K562 (cell line): ENCODE measurements at regions of chr10 and their contacts with region 1.

Region 1: DNA sequence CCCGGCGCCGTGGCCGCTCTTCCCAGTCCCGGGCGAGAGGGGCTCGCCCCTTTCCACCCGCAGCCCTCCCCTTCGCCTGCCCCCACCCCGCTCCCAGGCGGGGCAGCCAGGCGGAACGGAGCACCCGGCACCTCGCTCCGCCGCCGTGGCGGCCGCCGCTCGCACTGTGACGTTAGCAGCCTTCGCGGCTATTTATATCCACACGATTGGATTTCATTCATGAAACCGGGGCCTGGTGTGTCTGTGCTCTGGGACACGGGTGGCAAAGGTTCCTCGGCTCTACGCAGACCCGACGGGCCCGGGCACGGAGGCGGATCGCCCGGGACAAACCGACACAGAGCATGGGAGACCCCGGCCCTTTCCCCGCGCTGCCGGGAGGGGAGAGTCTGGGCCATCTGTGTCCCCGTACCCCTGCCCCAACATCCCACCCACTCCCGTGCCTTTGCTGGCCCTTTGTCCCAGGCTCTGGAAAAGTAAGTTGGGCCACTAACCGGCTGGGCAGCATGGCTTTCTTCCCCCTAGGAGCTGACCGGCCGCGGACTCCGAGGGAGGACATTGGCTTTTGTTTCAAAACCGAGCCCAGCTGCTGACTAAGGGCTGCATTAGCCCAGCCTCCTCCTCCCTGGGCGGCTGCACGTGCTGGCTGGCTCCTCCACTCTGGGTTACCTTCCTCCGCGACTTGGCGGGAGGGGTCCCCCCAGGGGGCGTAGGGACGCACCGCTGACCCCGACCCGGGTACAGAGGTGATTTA is at the start of gene RHOBTB1:
- DNase-seq: peak; percentile 73 to 83 (median 78)
- ATAC-seq: peak; percentile 84
- H3K4me3 ChIP-seq: peak within 1 kb of the TSS; percentile 67
- H3K27ac ChIP-seq: peak within 1 kb of the TSS; percentile 87
- H3K4me1 ChIP-seq: peaks cover 15 to 23% of the 10 kb centered on the region in 2 experiments; a peak in 4 of 5 replicates
- H3K27me3 ChIP-seq: no peaks in the 10 kb centered on the region
- CTCF ChIP-seq: 0 out of 6 replicates have a peak, but pooled peaks of 1 of the 3 experiments have one; percentile 1
- EP300 ChIP-seq: no peak
- POLR2A ChIP-seq: peak; percentile 74
- RAD21 ChIP-seq: no peak
- polyA plus RNA-seq, gene RHOBTB1: 1.7 to 3.8 TPM

Region 2: DNA sequence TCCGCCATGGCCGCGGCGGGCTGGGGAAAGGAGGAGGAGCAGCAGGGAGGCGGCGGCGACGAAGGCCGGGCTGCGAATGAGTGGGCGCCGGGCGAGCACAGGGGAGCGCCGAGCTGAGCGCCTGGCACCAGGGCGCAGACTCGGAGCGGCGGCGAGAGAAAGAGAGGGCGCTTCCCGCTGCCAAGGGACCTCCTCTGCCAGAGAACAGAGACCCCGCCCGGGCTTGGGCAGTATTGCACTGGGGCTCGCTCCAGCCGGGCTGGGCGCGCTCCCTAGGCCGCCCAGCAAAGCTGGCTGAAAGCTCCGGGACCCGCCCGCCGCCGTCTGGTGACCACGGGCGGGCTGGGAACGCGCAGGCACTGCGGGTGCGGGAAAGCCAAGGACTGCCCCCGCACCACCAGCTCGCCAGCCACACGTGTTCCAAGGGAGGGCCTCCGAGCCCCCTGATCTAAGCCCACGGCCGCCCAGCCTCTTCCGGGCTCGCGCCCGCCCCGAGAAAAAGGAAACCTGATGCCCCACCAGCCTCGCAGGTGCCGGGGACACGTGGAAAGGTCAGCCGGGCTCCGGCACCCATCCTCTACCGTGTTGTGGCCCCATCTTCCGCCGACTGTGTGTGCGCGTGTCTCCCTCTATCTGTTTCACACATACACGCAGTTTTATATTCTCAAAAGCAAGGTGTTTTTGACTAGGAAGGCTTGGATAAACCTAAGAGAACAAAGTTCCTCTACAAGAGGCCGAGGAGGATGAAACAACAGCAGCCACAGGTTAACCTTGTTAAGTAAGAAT is 1037.7 kb before region 1 on chr10 and contains the start of gene CCDC6:
- CTCF ChIA-PET with region 1: no interaction called
- POLR2A ChIA-PET with region 1: no interaction called
- in situ Hi-C with region 1: no loop called
- intact Hi-C with region 1: no loop called
- DNase-seq: peak; percentile 86 to 93 (median 88)
- ATAC-seq: peak; percentile 91
- H3K4me3 ChIP-seq: peak within 1 kb of the TSS; percentile 86
- H3K27ac ChIP-seq: peak within 1 kb of the TSS; percentile 80
- H3K4me1 ChIP-seq: peaks cover 19 to 34% of the 10 kb centered on the region in 2 experiments
- H3K27me3 ChIP-seq: no peaks in the 10 kb centered on the region
- CTCF ChIP-seq: peak; percentile 59 to 89 (median 84)
- EP300 ChIP-seq: 0 out of 2 replicates have a peak, but pooled peaks have one; percentile 3
- POLR2A ChIP-seq: peak; percentile 84
- RAD21 ChIP-seq: peak; percentile 44 to 71; a peak in 3 of 4 replicates
- polyA plus RNA-seq, gene CCDC6: 10.4 to 12.7 TPM

Region 3: DNA sequence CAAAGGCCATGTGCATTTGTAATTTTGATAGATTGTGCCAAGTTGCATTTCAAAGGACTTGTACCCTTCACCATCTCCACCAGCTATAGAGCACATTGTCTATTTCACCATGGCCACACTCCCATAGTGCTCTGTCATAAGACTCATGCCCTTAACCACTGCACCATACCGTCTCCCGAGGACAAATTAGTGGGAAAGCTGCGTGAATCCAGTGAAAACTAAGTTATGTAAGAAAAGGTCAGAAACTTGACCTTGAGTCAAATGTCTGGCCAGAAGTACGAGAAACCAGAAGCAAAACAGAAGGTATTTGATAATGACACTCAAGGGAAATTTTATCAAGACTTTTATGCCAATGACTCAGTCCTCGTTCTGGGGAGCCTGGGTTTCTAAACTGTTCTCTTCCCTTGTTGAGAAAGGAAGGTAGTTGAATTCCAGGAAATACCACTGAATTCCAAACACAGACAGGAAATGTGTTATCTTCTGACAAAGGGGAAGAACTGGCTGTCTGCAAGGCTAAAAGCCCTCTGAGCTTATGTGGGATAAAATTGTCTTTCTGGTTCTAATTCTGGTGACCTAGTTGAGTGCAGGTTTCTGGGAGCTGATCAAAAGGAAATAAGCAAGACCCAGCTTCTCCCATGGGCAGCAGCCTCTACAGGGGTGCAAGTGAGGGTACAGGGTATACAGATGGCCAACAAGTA is 116.4 kb before region 1 on chr10:
- CTCF ChIA-PET with region 1: no interaction called
- POLR2A ChIA-PET with region 1: no interaction called
- in situ Hi-C with region 1: no loop called
- intact Hi-C with region 1: loop called (anchors 1 kb)
- DNase-seq: peak in 2 of 4 experiments; percentile 75 to 89
- ATAC-seq: peak; percentile 72
- H3K4me3 ChIP-seq: no peak overlapping the region
- H3K27ac ChIP-seq: peak overlapping the region; percentile 74
- H3K4me1 ChIP-seq: peaks cover 0 to 19% of the 10 kb centered on the region in 2 experiments; a peak in 4 of 5 replicates
- H3K27me3 ChIP-seq: no peaks in the 10 kb centered on the region
- CTCF ChIP-seq: no peak
- EP300 ChIP-seq: peak; percentile 87
- POLR2A ChIP-seq: no peak
- RAD21 ChIP-seq: peak in 1 of 2 experiments; percentile 25; a peak in 2 of 4 replicates

Region 4: DNA sequence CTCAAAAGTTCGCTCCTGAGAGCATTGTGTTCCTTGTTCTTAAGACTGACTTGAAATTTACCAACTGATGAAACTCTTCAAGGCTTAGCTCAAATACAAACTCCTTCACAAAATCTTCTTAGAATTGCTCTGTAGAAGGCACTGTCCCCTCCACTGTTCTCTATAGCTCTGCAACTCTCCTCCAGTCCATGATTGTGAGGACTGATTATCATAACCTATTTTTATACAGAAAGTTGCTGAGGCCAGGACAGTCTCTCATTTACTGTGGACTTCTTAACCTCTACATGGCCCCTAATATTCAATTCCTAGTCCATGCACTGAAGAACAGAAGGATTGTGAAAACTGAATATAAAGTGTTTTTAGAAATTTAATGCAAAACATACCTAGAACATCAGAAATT is 53.5 kb before region 1 on chr10:
- CTCF ChIA-PET with region 1: no interaction called
- POLR2A ChIA-PET with region 1: no interaction called
- in situ Hi-C with region 1: no loop called
- intact Hi-C with region 1: no loop called
- DNase-seq: no peak
- ATAC-seq: no peak
- H3K4me3 ChIP-seq: no peak overlapping the region
- H3K27ac ChIP-seq: no peak overlapping the region
- H3K4me1 ChIP-seq: no peaks in the 10 kb centered on the region
- H3K27me3 ChIP-seq: no peaks in the 10 kb centered on the region
- CTCF ChIP-seq: no peak
- EP300 ChIP-seq: no peak
- POLR2A ChIP-seq: no peak
- RAD21 ChIP-seq: no peak

Region 5: GRCh38 chr10:60955957-60956425 is 11.7 kb after region 1 on chr10:
- CTCF ChIA-PET with region 1: no interaction called
- POLR2A ChIA-PET with region 1: interaction called, 10 read pairs
- in situ Hi-C with region 1: no loop called
- intact Hi-C with region 1: no loop called
- DNase-seq: no peak
- ATAC-seq: no peak
- H3K4me3 ChIP-seq: no peak overlapping the region
- H3K27ac ChIP-seq: no peak overlapping the region
- H3K4me1 ChIP-seq: peaks cover 0 to 5% of the 10 kb centered on the region in 2 experiments; a peak in 1 of 5 replicates
- H3K27me3 ChIP-seq: no peaks in the 10 kb centered on the region
- CTCF ChIP-seq: no peak
- EP300 ChIP-seq: no peak
- POLR2A ChIP-seq: no peak
- RAD21 ChIP-seq: no peak

Region 6: DNA sequence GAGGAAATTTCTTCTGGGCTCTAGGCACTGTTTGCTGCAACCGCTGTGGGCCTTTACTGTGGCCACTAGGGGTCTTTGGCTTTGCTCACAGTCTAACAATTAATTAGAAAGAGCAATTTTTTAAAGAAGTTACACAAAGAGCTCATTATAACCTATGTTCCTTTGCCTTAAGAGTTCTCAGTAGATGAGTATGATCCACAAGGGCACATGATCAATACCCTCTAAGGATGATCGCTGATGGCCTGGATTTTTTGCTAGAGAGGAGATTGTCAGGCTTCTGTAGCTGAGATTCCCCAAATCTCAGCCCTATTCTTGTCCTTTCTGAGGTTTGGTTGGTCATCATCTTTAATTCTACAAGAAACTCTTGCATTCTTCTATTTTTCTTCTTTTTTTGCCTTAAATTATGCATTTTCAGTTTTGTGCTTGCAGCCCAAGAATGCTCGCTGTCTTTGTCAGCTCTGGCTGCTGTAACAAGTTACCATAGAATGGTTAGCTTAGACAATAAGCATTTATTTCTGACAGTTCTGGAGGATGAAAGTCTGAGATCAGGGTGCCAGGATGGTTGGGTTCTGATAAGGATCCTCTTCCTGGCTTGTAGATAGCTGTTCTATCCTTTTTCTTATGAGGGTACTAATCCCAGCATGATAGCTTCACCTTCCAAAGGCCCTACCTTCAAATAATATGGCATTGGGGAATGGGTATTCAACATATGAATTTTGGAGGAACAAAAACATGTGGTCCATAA is 80.7 kb after region 1 on chr10:
- CTCF ChIA-PET with region 1: no interaction called
- POLR2A ChIA-PET with region 1: no interaction called
- in situ Hi-C with region 1: no loop called
- intact Hi-C with region 1: no loop called
- DNase-seq: peak; percentile 31 to 44 (median 36)
- ATAC-seq: peak; percentile 84
- H3K4me3 ChIP-seq: no peak overlapping the region
- H3K27ac ChIP-seq: no peak overlapping the region
- H3K4me1 ChIP-seq: no peaks in the 10 kb centered on the region
- H3K27me3 ChIP-seq: peaks cover 0 to 4% of the 10 kb centered on the region in 2 experiments; a peak in 2 of 5 replicates
- CTCF ChIP-seq: peak; percentile 60 to 76 (median 68)
- EP300 ChIP-seq: no peak
- POLR2A ChIP-seq: no peak
- RAD21 ChIP-seq: peak; percentile 25 to 41; a peak in 2 of 4 replicates

Region 7: GRCh38 chr10:61301575-61301974 is 357.2 kb after region 1 on chr10:
- CTCF ChIA-PET with region 1: no interaction called
- POLR2A ChIA-PET with region 1: no interaction called
- in situ Hi-C with region 1: no loop called
- intact Hi-C with region 1: no loop called
- DNase-seq: no peak
- ATAC-seq: no peak
- H3K4me3 ChIP-seq: no peak overlapping the region
- H3K27ac ChIP-seq: no peak overlapping the region
- H3K4me1 ChIP-seq: no peaks in the 10 kb centered on the region
- H3K27me3 ChIP-seq: no peaks in the 10 kb centered on the region
- CTCF ChIP-seq: no peak
- EP300 ChIP-seq: no peak
- POLR2A ChIP-seq: no peak
- RAD21 ChIP-seq: no peak